ENCODE measurements at regions of chr2 and their contacts with region 1.

Region 1: DNA sequence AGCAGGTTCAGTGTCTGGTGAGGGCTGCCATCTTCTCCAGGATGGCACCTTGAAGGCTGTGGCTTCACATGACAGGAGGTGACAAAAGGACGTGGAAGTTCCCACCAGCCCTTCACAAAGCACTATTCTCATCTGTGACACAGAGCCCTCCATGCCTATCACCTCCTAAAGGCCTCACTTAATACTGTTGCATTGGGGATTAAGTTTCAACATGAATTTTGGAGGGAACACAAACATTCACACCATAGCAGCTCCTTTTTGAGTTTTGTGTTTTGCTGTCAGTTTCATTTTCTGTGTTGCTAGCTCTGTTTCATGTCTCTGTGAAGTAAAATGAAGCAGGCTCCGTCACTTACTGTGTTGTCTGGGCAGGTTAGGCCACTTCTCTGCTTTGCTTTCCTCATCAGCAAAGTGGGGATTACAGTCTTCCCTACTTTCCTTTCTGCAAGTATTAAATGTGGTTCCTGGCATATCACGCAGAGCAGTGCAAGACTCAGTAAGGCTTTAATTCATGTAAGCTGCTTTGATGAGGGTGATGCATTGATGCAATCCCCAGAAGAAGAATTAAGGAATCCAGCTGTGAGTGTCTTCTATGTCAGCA is 31.6 kb downstream of the LIMS1 start:
- DNase-seq: no peak
- H3K4me3 ChIP-seq: no peak overlapping the region
- H3K27ac ChIP-seq: no peak overlapping the region
- H3K4me1 ChIP-seq: no peaks in the 10 kb centered on the region
- CTCF ChIP-seq: no peak

Region 2: GRCh38 chr2:107187870-107188269 is 1378.0 kb before region 1 on chr2:
- CTCF ChIA-PET with region 1: no interaction called
- POLR2A ChIA-PET with region 1: no interaction called
- intact Hi-C with region 1: no loop called
- DNase-seq: no peak
- H3K4me3 ChIP-seq: no peak overlapping the region
- H3K27ac ChIP-seq: no peak overlapping the region
- H3K4me1 ChIP-seq: no peaks in the 10 kb centered on the region
- CTCF ChIP-seq: no peak

Region 3: DNA sequence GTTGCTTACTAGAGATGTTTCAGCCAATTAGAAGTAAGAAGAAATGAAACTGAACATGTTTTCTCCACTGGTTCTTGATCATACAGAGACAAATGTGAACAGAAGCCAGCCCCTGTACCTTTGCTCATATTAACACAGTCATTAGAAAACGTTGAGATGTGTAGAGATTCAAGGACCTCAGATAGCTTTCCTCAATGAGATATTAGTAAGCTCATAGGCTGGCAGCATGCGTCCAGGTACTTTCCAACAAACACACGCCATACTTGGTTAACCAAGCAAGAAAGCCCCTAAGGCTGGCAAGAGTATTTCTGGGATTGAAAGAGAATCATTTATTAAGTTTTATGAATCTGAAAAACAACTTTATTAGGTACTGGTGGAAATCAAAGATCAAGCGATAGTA is 542.1 kb before region 1 on chr2:
- CTCF ChIA-PET with region 1: no interaction called
- POLR2A ChIA-PET with region 1: no interaction called
- intact Hi-C with region 1: loop called (anchors 5 kb)
- DNase-seq: no peak
- H3K4me3 ChIP-seq: no peak overlapping the region
- H3K27ac ChIP-seq: no peak overlapping the region
- H3K4me1 ChIP-seq: no peaks in the 10 kb centered on the region
- CTCF ChIP-seq: no peak

Region 4: GRCh38 chr2:108621087-108621559 is 55.2 kb after region 1 on chr2:
- CTCF ChIA-PET with region 1: no interaction called
- POLR2A ChIA-PET with region 1: no interaction called
- intact Hi-C with region 1: no loop called
- DNase-seq: peak; percentile 90
- H3K4me3 ChIP-seq: peak overlapping the region; percentile 71
- H3K27ac ChIP-seq: peak overlapping the region; percentile 93
- H3K4me1 ChIP-seq: peaks cover 76% of the 10 kb centered on the region
- CTCF ChIP-seq: no peak

Region 5: GRCh38 chr2:108927936-108928659 is 362.2 kb after region 1 on chr2:
- CTCF ChIA-PET with region 1: no interaction called
- POLR2A ChIA-PET with region 1: no interaction called
- intact Hi-C with region 1: no loop called
- DNase-seq: peak; percentile 32
- H3K4me3 ChIP-seq: no peak overlapping the region
- H3K27ac ChIP-seq: no peak overlapping the region
- H3K4me1 ChIP-seq: no peaks in the 10 kb centered on the region
- CTCF ChIP-seq: peak; percentile 86

Measured in OCI-LY7 (cell line).